SK-N-SH (cell line): ENCODE measurements at regions of chr22 and their contacts with region 1.

Region 1: DNA sequence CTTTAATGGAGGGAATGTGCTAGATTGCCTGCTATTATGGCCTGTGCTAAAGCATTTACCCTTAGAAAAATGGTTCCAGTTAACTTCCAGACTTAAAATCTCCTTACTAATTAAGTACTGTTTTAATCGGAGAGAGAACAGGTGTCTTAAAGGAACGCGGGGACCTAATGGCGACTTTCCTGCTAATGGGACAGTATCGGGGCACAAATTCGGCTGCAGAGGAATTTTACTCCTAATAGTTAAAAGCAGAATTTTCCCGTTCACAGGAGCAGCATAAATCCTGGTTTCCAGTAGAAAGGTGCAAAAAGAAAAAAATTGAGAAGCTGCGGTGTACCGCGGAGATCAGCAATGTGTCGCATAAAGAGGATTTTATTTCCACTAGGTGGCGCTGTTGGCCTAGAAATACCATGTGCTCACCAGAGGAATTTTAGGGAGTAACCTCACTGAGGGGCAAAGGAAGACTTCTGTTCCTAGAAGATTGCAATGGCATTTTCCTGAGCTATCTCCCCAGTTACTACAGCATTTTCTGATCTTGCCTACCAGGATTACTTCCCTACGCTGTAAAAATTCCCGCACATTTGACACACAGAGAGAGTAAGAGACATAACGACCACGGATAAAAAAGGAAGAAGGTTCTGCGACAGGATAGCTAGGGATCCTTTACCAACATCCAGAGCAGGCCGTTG is 44.5 kb downstream of the ZNF280B start:
- DNase-seq: peak; percentile 67
- H3K4me3 ChIP-seq: peak overlapping the region in 1 of 2 experiments; percentile 20; a peak in 1 of 4 replicates
- H3K27ac ChIP-seq: no peak overlapping the region
- H3K4me1 ChIP-seq: peaks cover 0 to 2% of the 10 kb centered on the region in 2 experiments; a peak in 1 of 4 replicates
- H3K27me3 ChIP-seq: peaks cover 6% of the 10 kb centered on the region; the same call in 1 of the 2 replicates
- CTCF ChIP-seq: peak; percentile 84
- EP300 ChIP-seq: no peak
- RAD21 ChIP-seq: peak; percentile 93

Region 2: GRCh38 chr22:22450343-22450839 is 13.6 kb before region 1 on chr22:
- CTCF ChIA-PET with region 1: interaction called, 17 read pairs
- POLR2A ChIA-PET with region 1: no interaction called
- DNase-seq: no peak
- H3K4me3 ChIP-seq: no peak overlapping the region
- H3K27ac ChIP-seq: no peak overlapping the region
- H3K4me1 ChIP-seq: no peaks in the 10 kb centered on the region; a peak in 1 of 4 replicates
- H3K27me3 ChIP-seq: peaks cover 4% of the 10 kb centered on the region; the same call in 1 of the 2 replicates
- CTCF ChIP-seq: no peak
- EP300 ChIP-seq: no peak
- RAD21 ChIP-seq: no peak

Region 3: GRCh38 chr22:22487869-22488597 is 24.0 kb after region 1 on chr22:
- CTCF ChIA-PET with region 1: interaction called, 13 read pairs
- POLR2A ChIA-PET with region 1: no interaction called
- DNase-seq: no peak
- H3K4me3 ChIP-seq: no peak overlapping the region
- H3K27ac ChIP-seq: no peak overlapping the region
- H3K4me1 ChIP-seq: no peaks in the 10 kb centered on the region
- H3K27me3 ChIP-seq: no peaks in the 10 kb centered on the region
- CTCF ChIP-seq: no peak
- EP300 ChIP-seq: no peak
- RAD21 ChIP-seq: no peak

Region 4: DNA sequence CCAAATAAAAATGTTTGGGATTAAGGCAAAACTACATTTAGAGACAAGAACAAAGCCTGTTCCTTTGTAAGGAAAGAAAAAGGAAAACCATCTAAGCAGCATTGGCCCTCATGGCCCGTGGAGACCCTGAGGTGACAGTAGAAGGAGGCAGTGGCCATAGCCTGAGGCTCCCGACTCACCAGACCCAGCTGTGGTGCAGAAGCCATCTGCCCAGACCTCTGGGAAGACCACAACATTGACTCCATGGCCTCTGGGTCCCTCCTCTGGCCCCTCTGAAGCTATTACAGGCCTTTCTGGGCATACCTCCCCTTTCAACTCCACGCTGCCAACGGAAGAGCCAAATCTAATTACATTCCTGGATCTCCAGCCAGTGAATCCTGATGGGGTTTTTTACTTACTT is 88.6 kb after region 1 on chr22:
- CTCF ChIA-PET with region 1: interaction called, 11 read pairs
- POLR2A ChIA-PET with region 1: no interaction called
- DNase-seq: peak; percentile 80
- H3K4me3 ChIP-seq: peak overlapping the region in 1 of 2 experiments; percentile 13; a peak in 1 of 4 replicates
- H3K27ac ChIP-seq: peak overlapping the region in 1 of 2 experiments; percentile 63; a peak in 2 of 4 replicates
- H3K4me1 ChIP-seq: peaks cover 0 to 54% of the 10 kb centered on the region in 2 experiments; a peak in 3 of 4 replicates
- H3K27me3 ChIP-seq: no peaks in the 10 kb centered on the region
- CTCF ChIP-seq: peak; percentile 26
- EP300 ChIP-seq: no peak
- RAD21 ChIP-seq: peak; percentile 75

Region 5: GRCh38 chr22:22593964-22594656 is 130.1 kb after region 1 on chr22:
- CTCF ChIA-PET with region 1: interaction called, 39 read pairs
- POLR2A ChIA-PET with region 1: no interaction called
- DNase-seq: peak; percentile 73
- H3K4me3 ChIP-seq: no peak overlapping the region
- H3K27ac ChIP-seq: no peak overlapping the region
- H3K4me1 ChIP-seq: no peaks in the 10 kb centered on the region; a peak in 1 of 4 replicates
- H3K27me3 ChIP-seq: no peaks in the 10 kb centered on the region; the same call in 1 of the 2 replicates
- CTCF ChIP-seq: peak; percentile 78
- EP300 ChIP-seq: no peak
- RAD21 ChIP-seq: peak; percentile 80

Region 6: DNA sequence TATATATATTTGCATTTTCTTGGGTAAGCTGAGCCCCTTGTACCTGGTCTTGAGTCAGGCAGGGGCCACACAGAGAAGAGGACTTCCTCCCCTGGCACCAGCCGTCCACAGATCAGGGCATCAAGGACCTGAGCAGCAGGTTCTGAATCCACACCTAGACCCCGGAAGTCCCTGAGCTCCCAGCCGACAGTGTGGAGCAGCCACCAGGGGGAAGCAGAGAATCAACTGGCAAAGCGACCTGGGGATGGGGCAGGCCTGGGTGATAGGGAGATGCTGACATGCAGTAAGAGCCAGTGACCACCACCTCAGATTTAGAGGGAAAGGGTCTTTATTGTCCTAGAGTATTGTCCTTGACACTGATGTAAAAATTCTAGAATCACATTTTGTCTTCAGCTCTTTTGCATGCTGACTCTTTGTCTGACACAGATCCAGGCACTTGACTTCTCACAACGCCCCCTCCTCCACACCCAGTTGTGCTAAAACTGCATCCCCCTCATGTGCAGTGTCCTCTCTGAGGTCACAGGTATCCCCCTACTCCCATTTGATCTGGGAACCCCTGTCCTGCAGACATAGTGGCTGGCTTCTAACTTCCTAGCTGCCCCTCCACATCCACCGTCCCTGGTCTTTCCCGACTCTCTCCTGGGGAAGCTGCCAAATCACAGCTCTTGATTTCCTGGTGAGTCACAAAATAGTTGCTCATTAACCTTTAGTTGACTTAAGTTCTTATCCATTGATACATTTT is 289.7 kb after region 1 on chr22:
- CTCF ChIA-PET with region 1: interaction called, 17 read pairs
- POLR2A ChIA-PET with region 1: no interaction called
- DNase-seq: peak; percentile 79
- H3K4me3 ChIP-seq: peak overlapping the region in 1 of 2 experiments; percentile 35; a peak in 1 of 4 replicates
- H3K27ac ChIP-seq: no peak overlapping the region
- H3K4me1 ChIP-seq: no peaks in the 10 kb centered on the region
- H3K27me3 ChIP-seq: 0 out of 2 replicates have a peak, but pooled peaks cover 4% of the 10 kb centered on the region
- CTCF ChIP-seq: peak; percentile 60
- EP300 ChIP-seq: no peak
- RAD21 ChIP-seq: peak; percentile 63